Activated naive CD4-positive, alpha-beta T cell treated with anti-CD3 and anti-CD28 coated beads, Interleukin-2, amount 10 ng/mL, durations not matched to agents 7 days and 5 days (primary cell): ENCODE measurements at regions of chr1 and their contacts with region 1.

Region 1: GRCh38 chr1:204806943-204807687 is 63.5 kb upstream of the NFASC start:
- DNase-seq: peak; percentile 89
- H3K4me3 Mint-ChIP-seq: peak overlapping the region; percentile 78
- H3K27ac Mint-ChIP-seq: peak overlapping the region; percentile 3
- H3K4me1 Mint-ChIP-seq: peaks cover 18% of the 10 kb centered on the region
- H3K27me3 Mint-ChIP-seq: peaks cover 30% of the 10 kb centered on the region

Region 2: GRCh38 chr1:204506961-204507387 is 300.1 kb before region 1 on chr1:
- CTCF ChIA-PET with region 1: interaction called, 44 read pairs
- DNase-seq: peak; percentile 88
- H3K4me3 Mint-ChIP-seq: peak overlapping the region; percentile 87
- H3K27ac Mint-ChIP-seq: peak overlapping the region; percentile 100
- H3K4me1 Mint-ChIP-seq: peaks cover 57% of the 10 kb centered on the region
- H3K27me3 Mint-ChIP-seq: peaks cover 5% of the 10 kb centered on the region

Region 3: GRCh38 chr1:204578867-204579664 is 228.0 kb before region 1 on chr1:
- CTCF ChIA-PET with region 1: interaction called, 12 read pairs
- DNase-seq: peak; percentile 82
- H3K4me3 Mint-ChIP-seq: peak overlapping the region; percentile 75
- H3K27ac Mint-ChIP-seq: peak overlapping the region; percentile 96
- H3K4me1 Mint-ChIP-seq: peaks cover 50% of the 10 kb centered on the region
- H3K27me3 Mint-ChIP-seq: no peaks in the 10 kb centered on the region

Region 4: DNA sequence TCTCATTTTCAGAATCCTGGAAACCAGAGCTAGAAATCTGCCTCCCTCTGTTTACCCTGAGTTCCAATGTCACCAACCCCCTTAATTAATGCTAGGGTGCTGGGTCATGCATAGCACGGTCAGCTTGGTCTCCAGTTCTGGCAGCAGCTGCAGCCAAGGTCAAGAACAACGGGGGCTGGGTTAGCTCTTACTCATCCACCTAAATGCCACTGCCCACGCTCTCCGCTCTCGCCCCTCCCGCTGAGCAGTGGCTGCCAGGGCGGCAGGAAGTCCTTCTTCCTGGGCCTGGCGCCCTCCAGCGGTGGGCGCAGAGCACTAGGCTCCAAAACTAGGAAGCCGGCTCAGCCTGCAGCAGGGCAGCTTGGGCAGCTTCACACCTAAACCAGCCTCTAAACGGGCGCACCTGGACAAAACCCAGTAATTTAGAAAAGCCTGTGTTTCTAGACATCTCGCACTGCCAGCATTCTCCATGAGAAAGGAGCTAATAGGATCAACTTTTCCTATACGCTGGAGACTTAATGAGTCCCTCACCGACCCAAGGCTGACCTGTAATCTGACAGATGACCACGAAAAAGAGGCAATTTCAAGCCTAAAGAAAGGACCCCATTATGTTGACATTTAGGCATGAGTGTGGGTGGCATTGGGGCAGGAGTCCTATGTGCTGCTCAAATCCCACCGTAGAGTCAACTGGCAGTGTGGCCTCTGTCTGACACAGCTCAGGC is 43.2 kb before region 1 on chr1:
- CTCF ChIA-PET with region 1: interaction called, 23 read pairs
- DNase-seq: peak; percentile 84
- H3K4me3 Mint-ChIP-seq: peak overlapping the region; percentile 8
- H3K27ac Mint-ChIP-seq: no peak overlapping the region
- H3K4me1 Mint-ChIP-seq: peaks cover 9% of the 10 kb centered on the region
- H3K27me3 Mint-ChIP-seq: peaks cover 49% of the 10 kb centered on the region

Region 5: GRCh38 chr1:204830747-204831146 is 23.6 kb after region 1 on chr1:
- CTCF ChIA-PET with region 1: interaction called, 11 read pairs
- DNase-seq: no peak
- H3K4me3 Mint-ChIP-seq: no peak overlapping the region
- H3K27ac Mint-ChIP-seq: no peak overlapping the region
- H3K4me1 Mint-ChIP-seq: peaks cover 6% of the 10 kb centered on the region
- H3K27me3 Mint-ChIP-seq: peaks cover 77% of the 10 kb centered on the region